ENCODE measurements at regions of chr5 and their contacts with region 1.

Region 1: DNA sequence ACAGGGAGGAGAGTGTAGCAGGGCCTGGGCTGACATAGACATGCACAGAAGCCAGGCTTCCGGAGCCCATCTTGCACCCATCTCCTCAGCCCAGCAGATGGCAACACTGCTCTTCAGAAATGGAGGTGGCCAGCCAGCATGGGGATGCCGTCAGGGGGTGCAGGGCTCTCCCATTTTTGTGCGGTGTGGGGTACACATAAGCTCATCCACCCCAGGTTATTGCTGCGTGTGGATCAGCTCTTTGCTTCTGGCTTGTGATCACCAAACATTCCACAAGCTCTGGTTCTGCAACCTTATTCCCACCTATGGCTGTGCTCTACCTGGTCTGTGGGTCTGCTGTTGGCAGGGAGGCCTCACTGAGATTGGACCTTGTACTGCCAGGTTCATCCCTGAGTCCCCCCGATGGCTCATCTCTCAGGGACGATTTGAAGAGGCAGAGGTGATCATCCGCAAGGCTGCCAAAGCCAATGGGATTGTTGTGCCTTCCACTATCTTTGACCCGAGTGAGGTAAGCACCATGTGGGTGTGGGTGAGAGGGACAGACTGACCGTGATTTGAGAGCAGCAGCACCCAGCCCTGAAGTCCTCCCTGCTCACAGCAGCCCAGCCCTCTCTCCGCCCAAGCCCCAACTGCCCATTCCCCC is 17.3 kb downstream of the SLC22A5 start:
- DNase-seq: peak; percentile 46
- ATAC-seq: peak; percentile 56
- H3K4me3 ChIP-seq: no peak overlapping the region
- H3K27ac ChIP-seq: peak overlapping the region; percentile 80
- H3K4me1 ChIP-seq: peaks cover 44 to 61% of the 10 kb centered on the region in 2 experiments
- H3K27me3 ChIP-seq: no peaks in the 10 kb centered on the region
- CTCF ChIP-seq: peak in 2 of 3 experiments; percentile 82 to 83; a peak in 4 of 6 replicates
- POLR2A ChIP-seq: no peak
- RAD21 ChIP-seq: no peak

Region 2: GRCh38 chr5:132180134-132180745 is 206.5 kb before region 1 on chr5:
- CTCF ChIA-PET with region 1: no interaction called
- POLR2A ChIA-PET with region 1: no interaction called
- RAD21 ChIA-PET with region 1: no interaction called
- intact Hi-C with region 1: loop called (anchors 1 kb)
- DNase-seq: peak; percentile 47
- ATAC-seq: peak; percentile 73
- H3K4me3 ChIP-seq: no peak overlapping the region
- H3K27ac ChIP-seq: no peak overlapping the region
- H3K4me1 ChIP-seq: peaks cover 3 to 19% of the 10 kb centered on the region in 2 experiments; a peak in 3 of 4 replicates
- H3K27me3 ChIP-seq: no peaks in the 10 kb centered on the region
- CTCF ChIP-seq: peak; percentile 72 to 85 (median 75); a peak in 5 of 6 replicates
- POLR2A ChIP-seq: no peak
- RAD21 ChIP-seq: peak; percentile 83

Region 3: GRCh38 chr5:132272311-132273210 is 114.2 kb before region 1 on chr5:
- CTCF ChIA-PET with region 1: no interaction called
- POLR2A ChIA-PET with region 1: no interaction called
- RAD21 ChIA-PET with region 1: no interaction called
- intact Hi-C with region 1: no loop called
- DNase-seq: no peak
- ATAC-seq: peak; percentile 80
- H3K4me3 ChIP-seq: no peak overlapping the region
- H3K27ac ChIP-seq: no peak overlapping the region
- H3K4me1 ChIP-seq: peaks cover 0 to 9% of the 10 kb centered on the region in 2 experiments; a peak in 2 of 4 replicates
- H3K27me3 ChIP-seq: no peaks in the 10 kb centered on the region
- CTCF ChIP-seq: peak; percentile 80 to 90 (median 86)
- POLR2A ChIP-seq: no peak
- RAD21 ChIP-seq: peak; percentile 78

Region 4: GRCh38 chr5:132495667-132496190 is 109.0 kb after region 1 on chr5:
- CTCF ChIA-PET with region 1: interaction called, 37 read pairs
- POLR2A ChIA-PET with region 1: interaction called, 9 read pairs
- RAD21 ChIA-PET with region 1: interaction called, 9 to 13 read pairs
- intact Hi-C with region 1: loop called (anchors 1 kb)
- DNase-seq: no peak
- ATAC-seq: peak; percentile 61
- H3K4me3 ChIP-seq: peak overlapping the region; percentile 73 to 85
- H3K27ac ChIP-seq: peak overlapping the region; percentile 90
- H3K4me1 ChIP-seq: peaks cover 30 to 71% of the 10 kb centered on the region in 2 experiments
- H3K27me3 ChIP-seq: no peaks in the 10 kb centered on the region
- CTCF ChIP-seq: no peak
- POLR2A ChIP-seq: no peak
- RAD21 ChIP-seq: no peak

Region 5: DNA sequence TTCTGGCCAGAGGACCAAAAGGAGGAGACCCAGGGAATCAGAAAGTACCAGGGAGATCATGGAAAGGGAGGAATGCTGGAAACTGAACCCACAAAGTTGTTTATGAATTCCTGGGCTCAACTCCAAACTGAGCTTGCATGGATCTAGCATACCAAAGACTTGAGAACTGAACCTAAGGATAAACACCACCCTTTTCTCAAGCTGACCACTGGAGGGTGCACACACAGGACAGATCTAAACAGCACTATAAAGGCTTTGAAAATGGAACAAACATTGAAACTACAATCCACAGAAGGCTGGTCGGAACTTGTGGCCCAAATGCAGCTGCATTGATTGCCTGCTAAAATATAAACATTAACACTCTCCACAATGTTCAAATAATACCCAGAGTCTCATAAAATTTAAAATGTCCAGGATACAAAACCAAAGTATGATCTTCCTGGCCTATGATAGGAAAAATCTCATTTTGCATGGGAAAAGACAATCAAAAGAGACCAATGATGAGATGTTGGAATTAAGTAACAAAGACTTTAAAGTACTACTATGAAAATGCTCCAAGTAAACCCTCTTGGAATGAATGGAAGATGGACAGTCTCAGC is 119.4 kb after region 1 on chr5:
- CTCF ChIA-PET with region 1: interaction called, 37 read pairs
- POLR2A ChIA-PET with region 1: interaction called, 9 read pairs
- RAD21 ChIA-PET with region 1: interaction called, 9 to 13 read pairs
- intact Hi-C with region 1: loop called (anchors 1 kb)
- DNase-seq: peak; percentile 35
- ATAC-seq: peak; percentile 85
- H3K4me3 ChIP-seq: no peak overlapping the region
- H3K27ac ChIP-seq: no peak overlapping the region
- H3K4me1 ChIP-seq: peaks cover 8 to 32% of the 10 kb centered on the region in 2 experiments
- H3K27me3 ChIP-seq: no peaks in the 10 kb centered on the region
- CTCF ChIP-seq: peak in 2 of 3 experiments; percentile 69 to 70; a peak in 4 of 6 replicates
- POLR2A ChIP-seq: no peak
- RAD21 ChIP-seq: no peak

Region 6: DNA sequence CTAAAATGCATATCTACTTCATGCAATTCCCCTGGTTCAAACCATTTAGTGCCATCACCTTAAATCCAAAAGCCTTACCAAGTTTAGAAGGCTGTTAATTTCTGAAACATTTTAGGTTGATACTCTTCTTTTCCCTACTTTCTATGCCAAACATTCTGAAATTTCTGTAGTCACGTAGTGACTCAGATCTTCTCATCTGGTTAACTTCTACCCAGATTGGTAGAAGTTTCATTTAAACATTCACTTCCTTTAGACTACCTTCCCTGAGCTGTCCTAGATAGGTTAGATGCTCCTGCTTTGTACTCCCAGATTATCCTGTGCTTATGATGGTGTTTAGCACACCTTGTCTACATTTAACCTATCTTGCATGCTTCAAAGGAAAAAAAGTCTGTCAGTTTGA is 179.9 kb after region 1 on chr5:
- CTCF ChIA-PET with region 1: no interaction called
- POLR2A ChIA-PET with region 1: no interaction called
- RAD21 ChIA-PET with region 1: no interaction called
- intact Hi-C with region 1: no loop called
- DNase-seq: no peak
- ATAC-seq: no peak
- H3K4me3 ChIP-seq: no peak overlapping the region
- H3K27ac ChIP-seq: no peak overlapping the region
- H3K4me1 ChIP-seq: no peaks in the 10 kb centered on the region
- H3K27me3 ChIP-seq: no peaks in the 10 kb centered on the region
- CTCF ChIP-seq: no peak
- POLR2A ChIP-seq: no peak
- RAD21 ChIP-seq: no peak

Region 7: GRCh38 chr5:132674671-132675506 is 288.1 kb after region 1 on chr5:
- CTCF ChIA-PET with region 1: no interaction called
- POLR2A ChIA-PET with region 1: no interaction called
- RAD21 ChIA-PET with region 1: no interaction called
- intact Hi-C with region 1: loop called (anchors 5 kb)
- DNase-seq: peak; percentile 26
- ATAC-seq: no peak
- H3K4me3 ChIP-seq: 0 out of 4 replicates have a peak overlapping the region, but pooled peaks of 1 of the 2 experiments have one; percentile 1
- H3K27ac ChIP-seq: no peak overlapping the region
- H3K4me1 ChIP-seq: peaks cover 24 to 34% of the 10 kb centered on the region in 2 experiments
- H3K27me3 ChIP-seq: no peaks in the 10 kb centered on the region
- CTCF ChIP-seq: no peak
- POLR2A ChIP-seq: no peak
- RAD21 ChIP-seq: no peak

Region 8: DNA sequence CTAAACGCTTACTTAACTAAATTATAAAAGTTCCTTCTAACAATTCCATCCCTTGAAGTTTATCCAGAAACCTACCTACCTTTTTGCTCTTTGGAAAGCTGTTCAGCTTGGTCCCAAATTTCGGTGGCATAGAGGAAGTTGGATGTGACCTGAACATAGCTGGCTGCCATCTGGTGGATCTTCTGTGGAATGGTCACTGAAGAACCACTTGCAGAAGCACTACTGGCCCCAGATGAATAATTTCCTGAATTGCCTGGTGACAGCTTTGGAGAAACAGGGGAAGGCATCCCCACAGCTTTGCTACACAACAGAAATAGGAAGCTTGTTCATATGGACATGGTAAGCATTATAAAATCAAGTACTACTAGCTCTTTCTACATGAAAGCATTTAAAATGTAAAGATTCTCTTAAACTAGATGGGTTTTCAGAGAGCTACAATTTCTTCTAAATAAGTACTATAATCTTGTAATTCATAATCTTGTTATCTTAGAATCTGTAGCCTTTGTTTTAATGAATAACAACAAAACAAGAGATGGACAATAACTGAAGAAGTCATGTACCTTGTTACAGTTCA is 496.6 kb after region 1 on chr5:
- CTCF ChIA-PET with region 1: no interaction called
- POLR2A ChIA-PET with region 1: no interaction called
- RAD21 ChIA-PET with region 1: no interaction called
- intact Hi-C with region 1: loop called (anchors 1 kb)
- DNase-seq: peak; percentile 52
- ATAC-seq: peak; percentile 98
- H3K4me3 ChIP-seq: no peak overlapping the region
- H3K27ac ChIP-seq: no peak overlapping the region
- H3K4me1 ChIP-seq: no peaks in the 10 kb centered on the region
- H3K27me3 ChIP-seq: no peaks in the 10 kb centered on the region
- CTCF ChIP-seq: peak; percentile 67 to 78 (median 71); a peak in 5 of 6 replicates
- POLR2A ChIP-seq: no peak
- RAD21 ChIP-seq: peak; percentile 67

Measured in HCT116 (cell line).